ENCODE measurements at regions of chr20 and their contacts with region 1.

Region 1: GRCh38 chr20:62019144-62019805 is 46.4 kb downstream of the TAF4 start:
- DNase-seq: no peak
- H3K4me3 ChIP-seq: no peak overlapping the region
- H3K27ac ChIP-seq: no peak overlapping the region
- H3K4me1 ChIP-seq: no peaks in the 10 kb centered on the region
- H3K27me3 ChIP-seq: no peaks in the 10 kb centered on the region
- CTCF ChIP-seq: no peak
- POLR2A ChIP-seq: no peak

Region 2: DNA sequence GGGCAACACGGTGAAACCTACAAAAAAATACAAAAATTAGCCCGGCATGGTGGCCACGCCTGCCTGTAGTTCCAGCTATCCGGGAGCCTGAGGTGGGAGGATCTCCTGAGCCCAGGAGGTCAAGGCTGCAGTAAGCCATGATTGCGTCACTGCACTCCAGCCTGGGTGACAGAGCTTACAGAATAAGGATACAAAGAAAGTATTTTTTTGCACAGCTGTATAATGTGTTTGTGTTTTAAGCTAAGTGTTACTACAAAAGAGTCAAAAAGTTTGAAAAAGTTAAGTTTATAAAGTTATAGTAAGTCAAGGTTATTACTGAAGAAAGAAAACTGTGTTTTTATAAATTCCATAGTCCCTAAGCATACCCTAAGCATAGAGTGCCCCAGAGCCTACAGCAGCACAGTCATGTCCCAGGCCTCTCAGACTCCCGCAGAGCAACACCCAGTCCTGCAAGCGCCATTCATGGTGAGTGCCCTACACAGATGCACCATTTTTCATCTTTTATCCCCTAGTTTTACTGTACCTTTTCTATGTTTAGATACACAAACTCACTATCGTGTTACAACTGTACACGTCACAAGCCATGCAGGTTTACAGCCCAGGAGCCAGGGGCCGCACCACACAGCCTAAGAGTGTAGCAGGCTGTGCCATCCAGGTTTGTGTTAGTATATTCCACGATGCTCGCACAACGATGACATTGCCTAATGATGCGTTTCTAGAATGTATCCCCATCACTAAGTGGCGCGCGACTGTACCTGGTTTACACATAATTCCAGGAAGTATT is 24.0 kb after region 1 on chr20:
- CTCF ChIA-PET with region 1: no interaction called
- POLR2A ChIA-PET with region 1: no interaction called
- dilution Hi-C with region 1: no loop called
- intact Hi-C with region 1: no loop called
- DNase-seq: no peak
- H3K4me3 ChIP-seq: no peak overlapping the region
- H3K27ac ChIP-seq: no peak overlapping the region
- H3K4me1 ChIP-seq: no peaks in the 10 kb centered on the region
- H3K27me3 ChIP-seq: no peaks in the 10 kb centered on the region
- CTCF ChIP-seq: no peak
- POLR2A ChIP-seq: no peak

Region 3: GRCh38 chr20:62112368-62112767 is 93.1 kb after region 1 on chr20:
- CTCF ChIA-PET with region 1: no interaction called
- POLR2A ChIA-PET with region 1: interaction called, 13 read pairs
- dilution Hi-C with region 1: no loop called
- intact Hi-C with region 1: no loop called
- DNase-seq: no peak
- H3K4me3 ChIP-seq: no peak overlapping the region
- H3K27ac ChIP-seq: no peak overlapping the region
- H3K4me1 ChIP-seq: no peaks in the 10 kb centered on the region
- H3K27me3 ChIP-seq: peaks cover 1 to 6% of the 10 kb centered on the region in 2 experiments
- CTCF ChIP-seq: no peak
- POLR2A ChIP-seq: no peak

Region 4: DNA sequence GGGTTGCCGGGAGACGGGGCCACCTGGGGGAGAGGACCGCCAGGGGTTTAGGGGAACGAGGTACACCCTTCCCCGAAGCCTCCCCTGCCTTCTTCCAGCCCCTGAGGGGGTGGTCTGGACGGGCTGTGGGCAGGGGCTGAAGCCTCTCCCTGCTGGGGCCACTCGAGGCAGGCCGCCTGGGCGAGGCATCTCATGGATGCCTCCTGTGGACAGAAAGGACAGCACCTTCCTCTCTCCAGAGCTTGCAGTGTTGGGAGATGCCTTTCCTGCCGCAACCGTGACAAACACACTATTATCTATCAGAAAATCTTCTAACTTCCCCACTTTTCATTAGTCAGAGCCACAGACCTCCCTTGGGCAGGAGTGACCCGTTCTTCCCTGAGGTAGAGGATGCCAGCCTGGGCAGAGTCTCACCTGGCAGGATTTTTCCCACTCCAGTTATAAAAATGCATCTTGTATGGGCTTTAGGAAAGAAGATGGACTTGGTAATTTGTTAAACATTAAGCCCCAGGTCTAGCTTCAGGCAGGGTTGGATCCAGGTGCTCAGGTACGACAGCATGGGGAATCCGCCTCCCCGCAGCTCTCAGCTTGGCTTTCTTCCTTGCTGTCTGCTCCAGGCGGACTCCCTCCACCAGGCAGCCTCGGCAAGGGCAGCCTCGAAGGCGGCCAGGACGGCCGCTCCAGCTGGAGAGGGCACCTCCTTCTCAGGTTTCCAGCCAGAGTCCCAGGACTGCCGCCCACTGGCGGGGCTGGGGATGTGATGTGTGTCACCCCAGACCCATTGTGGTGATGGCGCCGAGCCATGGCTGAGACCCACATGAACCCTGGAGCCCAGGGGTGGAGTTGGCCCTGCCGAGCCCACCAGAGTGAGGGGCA is 189.8 kb after region 1 on chr20:
- CTCF ChIA-PET with region 1: no interaction called
- POLR2A ChIA-PET with region 1: no interaction called
- dilution Hi-C with region 1: no loop called
- intact Hi-C with region 1: no loop called
- DNase-seq: no peak
- H3K4me3 ChIP-seq: no peak overlapping the region
- H3K27ac ChIP-seq: no peak overlapping the region
- H3K4me1 ChIP-seq: no peaks in the 10 kb centered on the region
- H3K27me3 ChIP-seq: no peaks in the 10 kb centered on the region
- CTCF ChIP-seq: peak in 1 of 2 donors; percentile 37
- POLR2A ChIP-seq: no peak